Naive thymus-derived CD4-positive, alpha-beta T cell (primary cell): ENCODE measurements at regions of chr3 and their contacts with region 1.

Region 1: DNA sequence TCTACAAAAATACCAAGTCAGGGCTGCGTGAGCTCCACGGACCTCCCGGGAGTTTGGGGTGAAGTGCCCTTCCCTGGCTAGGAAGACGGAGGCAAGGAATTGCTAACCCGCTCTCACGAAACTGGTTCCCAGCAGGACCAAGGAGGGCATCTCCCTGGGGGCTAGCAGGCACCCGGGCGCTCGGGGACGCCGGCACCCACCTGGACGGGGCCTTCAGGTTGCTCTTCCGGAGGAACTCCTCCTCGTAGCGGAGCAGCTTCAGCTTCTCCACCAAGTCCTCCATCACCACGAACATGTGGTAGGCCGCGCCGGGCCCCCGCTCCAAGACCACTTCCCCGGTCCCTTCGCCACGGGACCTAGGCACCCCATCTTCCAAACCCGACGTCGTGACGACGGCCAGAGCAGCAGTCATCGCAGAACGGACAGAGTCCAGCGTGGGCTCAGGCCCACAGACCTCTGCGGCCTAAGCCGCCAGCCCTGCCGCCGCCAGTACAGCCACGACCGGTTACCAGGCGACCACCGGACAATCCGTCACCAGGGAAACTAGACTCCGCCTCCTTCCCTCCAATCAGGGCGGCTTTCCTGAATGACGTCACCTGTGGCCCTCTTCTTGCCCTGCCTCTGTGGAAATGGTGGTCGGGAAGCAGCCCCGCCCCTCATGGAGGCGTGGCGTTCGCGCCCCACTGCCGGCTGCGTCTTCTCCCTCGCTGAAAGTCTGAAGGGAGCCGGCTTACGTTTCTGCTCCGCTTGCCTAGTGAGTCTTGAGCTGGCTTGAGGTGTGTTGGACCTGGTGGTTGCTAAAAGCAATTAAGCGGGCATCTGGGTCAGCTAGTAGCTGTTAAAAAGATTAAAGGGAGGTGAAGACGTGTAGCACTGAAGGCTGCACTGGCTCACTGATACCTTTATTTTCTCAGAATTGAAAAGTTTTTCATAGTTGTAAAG is at the start of gene IFT57:
- DNase-seq: peak; percentile 89 to 97 (median 96)
- ATAC-seq: peak; percentile 97
- H3K4me3 ChIP-seq: peak within 1 kb of the TSS; percentile 59
- H3K4me3 Mint-ChIP-seq: peak within 1 kb of the TSS; percentile 93 to 99 (median 97)
- H3K27ac ChIP-seq: peak within 1 kb of the TSS; percentile 95
- H3K27ac Mint-ChIP-seq: peak within 1 kb of the TSS; percentile 95 to 100 (median 99)
- H3K4me1 ChIP-seq: peaks cover 21 to 24% of the 10 kb centered on the region in 2 donors
- H3K4me1 Mint-ChIP-seq: peaks cover 27 to 83% (median 62%) of the 10 kb centered on the region in 7 donors
- H3K27me3 ChIP-seq: no peaks in the 10 kb centered on the region
- H3K27me3 Mint-ChIP-seq: no peaks in the 10 kb centered on the region
- total RNA-seq, gene IFT57: 18.0 to 45.4 (median 26.4) TPM

Region 2: GRCh38 chr3:107035176-107035575 is 1187.0 kb before region 1 on chr3:
- CTCF ChIA-PET with region 1: no interaction called
- POLR2A ChIA-PET with region 1: no interaction called
- intact Hi-C with region 1: no loop called
- DNase-seq: no peak
- ATAC-seq: no peak
- H3K4me3 ChIP-seq: no peak overlapping the region
- H3K4me3 Mint-ChIP-seq: no peak overlapping the region
- H3K27ac ChIP-seq: no peak overlapping the region
- H3K27ac Mint-ChIP-seq: no peak overlapping the region
- H3K4me1 ChIP-seq: no peaks in the 10 kb centered on the region
- H3K4me1 Mint-ChIP-seq: no peaks in the 10 kb centered on the region
- H3K27me3 ChIP-seq: no peaks in the 10 kb centered on the region
- H3K27me3 Mint-ChIP-seq: peaks cover 0 to 4% (median 0%) of the 10 kb centered on the region in 5 donors

Region 3: DNA sequence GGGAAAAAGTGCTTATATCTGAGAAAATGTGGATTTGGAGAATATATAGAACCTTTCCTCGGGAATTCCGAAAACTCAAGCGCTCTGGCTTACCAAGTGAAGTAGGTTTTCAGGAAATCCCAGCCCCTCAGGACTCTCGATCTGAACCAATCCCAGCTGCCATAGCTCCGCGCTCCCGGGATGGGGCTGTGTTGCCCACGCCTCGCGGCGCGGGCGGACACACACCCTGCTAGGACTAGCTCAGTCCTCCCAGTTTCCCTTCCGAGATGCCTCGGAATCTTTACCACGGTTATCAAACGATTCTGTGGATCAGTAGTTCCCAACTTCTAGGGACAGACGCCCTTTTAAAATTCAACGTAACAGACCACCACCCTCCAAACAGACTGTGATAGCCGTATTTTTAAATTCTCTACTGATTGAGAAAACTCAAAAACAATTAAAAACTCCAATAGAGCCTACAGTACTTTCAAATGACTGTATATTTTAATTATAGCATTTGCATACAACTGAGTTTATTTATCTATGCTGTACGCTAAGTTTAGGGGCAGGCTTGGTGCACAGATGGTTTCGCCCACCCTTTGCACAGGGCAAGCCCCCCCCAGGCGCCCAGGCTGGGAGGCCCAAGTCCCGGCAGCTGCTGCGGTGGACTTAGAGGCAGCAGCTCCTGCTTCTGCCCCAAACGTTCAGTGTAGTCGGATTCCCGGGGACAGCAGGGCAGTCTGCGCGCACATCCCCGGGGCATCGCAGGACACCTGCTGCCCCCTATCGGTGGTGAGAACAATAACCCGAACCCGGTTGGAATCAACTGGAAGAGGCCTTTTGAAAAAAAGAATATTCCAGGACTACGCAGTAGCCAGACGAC is 792.6 kb before region 1 on chr3:
- CTCF ChIA-PET with region 1: no interaction called
- POLR2A ChIA-PET with region 1: no interaction called
- intact Hi-C with region 1: loop called in 1 of 2 experiments (anchors 10 kb)
- DNase-seq: peak; percentile 33 to 72 (median 61)
- ATAC-seq: peak; percentile 77
- H3K4me3 ChIP-seq: peak overlapping the region; percentile 76
- H3K4me3 Mint-ChIP-seq: peak overlapping the region; percentile 81 to 95 (median 90)
- H3K27ac ChIP-seq: no peak overlapping the region
- H3K27ac Mint-ChIP-seq: peak overlapping the region in 3 of 9 donors; percentile 25 to 80 (median 38)
- H3K4me1 ChIP-seq: peaks cover 11 to 12% of the 10 kb centered on the region in 2 donors
- H3K4me1 Mint-ChIP-seq: peaks cover 0 to 27% (median 13%) of the 10 kb centered on the region in 7 donors
- H3K27me3 ChIP-seq: no peaks in the 10 kb centered on the region
- H3K27me3 Mint-ChIP-seq: peaks cover 0 to 61% (median 0%) of the 10 kb centered on the region in 5 donors

Region 4: GRCh38 chr3:107987036-107987947 is 234.9 kb before region 1 on chr3:
- CTCF ChIA-PET with region 1: no interaction called
- POLR2A ChIA-PET with region 1: no interaction called
- intact Hi-C with region 1: loop called in 1 of 2 experiments (anchors 5 kb)
- DNase-seq: no peak
- ATAC-seq: peak; percentile 19
- H3K4me3 ChIP-seq: no peak overlapping the region
- H3K4me3 Mint-ChIP-seq: no peak overlapping the region
- H3K27ac ChIP-seq: no peak overlapping the region
- H3K27ac Mint-ChIP-seq: peak overlapping the region in 1 of 9 donors; percentile 30
- H3K4me1 ChIP-seq: peaks cover 0 to 6% of the 10 kb centered on the region in 2 donors
- H3K4me1 Mint-ChIP-seq: peaks cover 11 to 31% (median 21%) of the 10 kb centered on the region in 7 donors
- H3K27me3 ChIP-seq: no peaks in the 10 kb centered on the region
- H3K27me3 Mint-ChIP-seq: no peaks in the 10 kb centered on the region

Region 5: DNA sequence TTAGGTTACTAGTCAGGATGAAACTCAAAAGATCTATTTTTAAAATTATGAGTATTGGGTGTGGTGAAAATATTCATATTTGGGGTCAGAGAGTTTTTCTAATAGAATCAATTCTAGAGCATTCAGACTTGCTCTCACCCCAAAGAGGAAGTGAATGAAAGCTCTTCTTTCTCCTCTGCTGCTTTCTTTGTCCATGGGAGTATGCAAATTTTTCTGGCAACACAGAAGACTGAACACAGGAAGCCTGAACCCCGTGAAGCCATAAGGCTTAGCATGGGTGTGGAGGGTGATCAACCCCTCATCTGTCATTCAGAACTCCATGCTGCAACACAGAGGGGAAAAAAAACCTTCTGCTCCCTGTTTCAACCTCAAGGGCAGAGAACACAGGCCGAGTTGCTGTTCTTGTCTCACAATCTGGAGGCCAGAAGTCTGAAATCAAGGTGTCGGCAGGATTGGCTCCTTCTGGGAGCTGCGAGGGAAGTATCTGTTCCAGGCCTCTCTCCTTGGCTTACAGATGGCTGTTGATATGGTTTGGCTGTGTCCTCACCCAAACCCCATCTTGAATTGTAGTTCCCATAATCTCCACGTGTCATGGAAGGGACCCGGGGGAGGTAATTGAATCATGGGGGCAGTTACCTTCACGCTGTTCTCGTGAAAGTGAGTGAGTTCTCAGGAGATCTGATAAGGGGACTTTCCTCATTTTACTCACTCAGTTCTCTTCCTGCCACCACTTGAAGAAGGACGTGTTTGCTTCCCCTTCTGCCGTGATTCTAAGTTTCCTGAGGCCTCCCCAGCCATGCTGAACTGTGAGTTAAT is 97.6 kb before region 1 on chr3:
- CTCF ChIA-PET with region 1: interaction called, 4 read pairs
- POLR2A ChIA-PET with region 1: interaction called, 87 read pairs
- intact Hi-C with region 1: loop called (anchors 1 kb)
- DNase-seq: peak; percentile 33 to 88 (median 74)
- ATAC-seq: peak; percentile 79
- H3K4me3 ChIP-seq: peak overlapping the region; percentile 66
- H3K4me3 Mint-ChIP-seq: peak overlapping the region; percentile 82 to 98 (median 90)
- H3K27ac ChIP-seq: peak overlapping the region; percentile 89
- H3K27ac Mint-ChIP-seq: peak overlapping the region; percentile 92 to 99 (median 97)
- H3K4me1 ChIP-seq: peaks cover 48 to 56% of the 10 kb centered on the region in 2 donors
- H3K4me1 Mint-ChIP-seq: peaks cover 52 to 92% (median 68%) of the 10 kb centered on the region in 7 donors
- H3K27me3 ChIP-seq: no peaks in the 10 kb centered on the region
- H3K27me3 Mint-ChIP-seq: peaks cover 0 to 2% (median 0%) of the 10 kb centered on the region in 5 donors

Region 6: DNA sequence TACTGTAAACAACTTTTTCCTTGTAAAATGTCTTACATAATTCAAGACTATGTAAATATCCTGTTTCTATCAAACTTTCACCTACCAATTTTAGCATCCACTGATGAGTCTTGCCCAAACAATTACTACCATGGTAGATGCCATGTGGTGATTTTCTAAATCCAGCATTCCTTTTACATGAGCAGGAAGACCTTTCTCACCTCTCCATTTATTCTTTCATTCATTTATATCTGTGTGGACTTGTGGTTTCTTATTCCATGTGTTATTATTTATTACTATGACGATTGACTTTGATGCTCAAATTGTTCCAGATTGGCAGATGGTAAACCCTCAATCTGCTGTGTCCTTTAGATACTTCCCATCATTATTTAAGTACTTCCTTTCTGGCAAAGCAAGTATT is 62.3 kb before region 1 on chr3:
- CTCF ChIA-PET with region 1: no interaction called
- POLR2A ChIA-PET with region 1: interaction called, 12 read pairs
- intact Hi-C with region 1: no loop called
- DNase-seq: no peak
- ATAC-seq: no peak
- H3K4me3 ChIP-seq: no peak overlapping the region
- H3K4me3 Mint-ChIP-seq: no peak overlapping the region
- H3K27ac ChIP-seq: no peak overlapping the region
- H3K27ac Mint-ChIP-seq: peak overlapping the region in 3 of 9 donors; percentile 2 to 38 (median 35)
- H3K4me1 ChIP-seq: no peaks in the 10 kb centered on the region
- H3K4me1 Mint-ChIP-seq: peaks cover 0 to 9% (median 7%) of the 10 kb centered on the region in 7 donors
- H3K27me3 ChIP-seq: no peaks in the 10 kb centered on the region
- H3K27me3 Mint-ChIP-seq: no peaks in the 10 kb centered on the region

Region 7: GRCh38 chr3:108250626-108251025 is 28.4 kb after region 1 on chr3:
- CTCF ChIA-PET with region 1: no interaction called
- POLR2A ChIA-PET with region 1: no interaction called
- intact Hi-C with region 1: no loop called
- DNase-seq: no peak
- ATAC-seq: no peak
- H3K4me3 ChIP-seq: no peak overlapping the region
- H3K4me3 Mint-ChIP-seq: no peak overlapping the region
- H3K27ac ChIP-seq: no peak overlapping the region
- H3K27ac Mint-ChIP-seq: no peak overlapping the region
- H3K4me1 ChIP-seq: no peaks in the 10 kb centered on the region
- H3K4me1 Mint-ChIP-seq: peaks cover 0 to 5% (median 0%) of the 10 kb centered on the region in 7 donors
- H3K27me3 ChIP-seq: no peaks in the 10 kb centered on the region
- H3K27me3 Mint-ChIP-seq: peaks cover 0 to 5% (median 0%) of the 10 kb centered on the region in 5 donors

Region 8: GRCh38 chr3:108301695-108302404 is 79.7 kb after region 1 on chr3:
- CTCF ChIA-PET with region 1: no interaction called
- POLR2A ChIA-PET with region 1: interaction called, 4 read pairs
- intact Hi-C with region 1: loop called in 1 of 2 experiments (anchors 2 kb)
- DNase-seq: peak in 3 of 9 donors; percentile 11 to 16 (median 16)
- ATAC-seq: peak; percentile 26
- H3K4me3 ChIP-seq: peak overlapping the region; percentile 21
- H3K4me3 Mint-ChIP-seq: peak overlapping the region in 8 of 10 donors; percentile 6 to 73 (median 49)
- H3K27ac ChIP-seq: no peak overlapping the region
- H3K27ac Mint-ChIP-seq: peak overlapping the region in 3 of 9 donors; percentile 14 to 87 (median 37)
- H3K4me1 ChIP-seq: no peaks in the 10 kb centered on the region
- H3K4me1 Mint-ChIP-seq: peaks cover 17 to 60% (median 24%) of the 10 kb centered on the region in 7 donors
- H3K27me3 ChIP-seq: no peaks in the 10 kb centered on the region
- H3K27me3 Mint-ChIP-seq: no peaks in the 10 kb centered on the region

Region 9: DNA sequence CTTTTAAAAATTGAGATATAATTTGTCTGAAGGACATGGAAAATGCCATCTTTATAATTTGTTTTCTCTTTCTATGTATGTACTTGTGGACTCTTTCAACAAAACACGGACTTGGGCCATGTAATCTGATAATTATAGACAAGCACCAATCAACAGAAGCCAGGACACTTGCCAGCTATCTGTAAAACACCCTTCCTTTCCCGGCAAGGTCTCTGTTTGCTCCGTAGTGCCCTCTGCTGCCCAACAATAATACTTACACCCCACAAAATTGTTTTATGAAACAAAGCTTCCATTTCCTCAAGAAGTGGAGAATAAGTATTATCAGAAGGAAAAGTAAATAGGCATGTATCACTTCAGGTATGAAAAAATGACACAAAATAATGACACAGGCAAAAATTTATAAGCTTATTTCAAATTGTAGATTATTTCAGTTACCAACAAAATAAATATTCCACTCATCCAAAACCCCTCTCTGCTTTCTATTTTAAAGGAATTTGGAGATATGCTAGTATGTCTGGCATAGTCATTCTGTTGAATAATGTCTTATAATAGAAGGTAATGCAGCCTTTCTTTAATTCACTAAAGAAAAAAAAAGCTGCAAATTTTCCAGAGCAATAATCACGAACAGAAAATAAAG is 255.4 kb after region 1 on chr3:
- CTCF ChIA-PET with region 1: no interaction called
- POLR2A ChIA-PET with region 1: no interaction called
- intact Hi-C with region 1: loop called (anchors 5 kb)
- DNase-seq: peak; percentile 17 to 65 (median 51)
- ATAC-seq: peak; percentile 91
- H3K4me3 ChIP-seq: no peak overlapping the region
- H3K4me3 Mint-ChIP-seq: no peak overlapping the region
- H3K27ac ChIP-seq: no peak overlapping the region
- H3K27ac Mint-ChIP-seq: no peak overlapping the region
- H3K4me1 ChIP-seq: no peaks in the 10 kb centered on the region
- H3K4me1 Mint-ChIP-seq: peaks cover 0 to 7% (median 0%) of the 10 kb centered on the region in 7 donors
- H3K27me3 ChIP-seq: no peaks in the 10 kb centered on the region
- H3K27me3 Mint-ChIP-seq: peaks cover 0 to 17% (median 3%) of the 10 kb centered on the region in 5 donors